MCF 10A (cell line): ENCODE measurements at regions of chr11 and their contacts with region 1.

Region 1: DNA sequence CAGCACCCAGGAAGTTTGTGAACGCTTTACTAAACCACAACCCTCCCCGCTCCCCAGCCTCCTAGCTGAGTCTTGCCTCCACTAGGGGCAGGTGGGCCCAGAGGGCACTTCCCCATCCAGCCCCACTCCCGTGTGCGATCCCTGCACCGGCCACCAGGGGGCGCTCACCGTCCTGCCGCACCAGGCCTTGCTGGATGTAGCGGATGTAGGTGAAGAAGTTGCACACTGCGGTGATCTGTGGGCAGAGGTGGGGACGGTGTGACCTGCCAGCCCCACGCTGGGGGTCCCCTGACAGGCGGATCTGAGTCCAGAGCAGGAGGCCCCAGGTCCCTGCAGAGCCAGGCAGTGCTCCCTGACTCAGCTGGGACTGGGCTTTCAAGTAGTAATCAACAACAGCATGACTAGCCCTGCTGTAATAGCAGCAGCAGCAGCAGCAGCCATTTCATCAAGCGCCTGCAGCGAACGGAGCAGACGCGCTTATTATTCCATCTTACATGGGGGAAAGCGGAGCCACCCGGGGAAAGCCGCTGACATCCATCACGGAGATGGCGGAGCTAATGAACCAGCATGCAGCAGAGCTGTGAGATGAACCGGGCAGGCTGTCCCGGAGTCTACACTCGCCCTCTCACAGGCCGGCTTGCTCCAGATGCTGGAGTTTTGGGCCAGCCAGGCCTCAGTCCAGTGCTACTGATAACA is 7.9 kb upstream of the FADS3 start:
- DNase-seq: peak; percentile 76
- H3K4me3 Mint-ChIP-seq: no peak overlapping the region
- H3K27ac Mint-ChIP-seq: no peak overlapping the region
- H3K4me1 Mint-ChIP-seq: peaks cover 1% of the 10 kb centered on the region
- H3K27me3 Mint-ChIP-seq: no peaks in the 10 kb centered on the region
- CTCF ChIP-seq: peak; percentile 100

Region 2: DNA sequence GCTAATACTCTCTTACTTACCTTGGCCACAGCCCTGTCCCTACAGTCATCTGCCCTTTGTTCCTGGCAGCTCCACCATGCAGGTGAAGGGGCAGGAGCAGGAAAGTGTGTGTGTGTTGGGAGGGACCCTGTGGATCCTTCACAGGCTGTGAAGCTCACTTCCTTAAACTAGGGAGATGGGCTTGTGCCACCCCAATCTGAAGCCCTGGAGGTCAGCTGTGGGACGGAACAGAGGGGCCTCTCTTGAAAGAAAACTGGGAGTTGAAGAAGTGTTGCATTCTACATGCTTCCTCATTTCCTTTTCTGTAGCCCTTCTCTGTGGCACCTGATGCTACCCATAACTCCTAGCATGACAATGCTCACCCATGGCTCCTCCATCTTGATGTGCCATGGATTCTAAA is 94.1 kb before region 1 on chr11:
- CTCF ChIA-PET with region 1: interaction called, 14 read pairs
- POLR2A ChIA-PET with region 1: interaction called, 3 read pairs
- intact Hi-C with region 1: no loop called
- DNase-seq: no peak
- H3K4me3 Mint-ChIP-seq: no peak overlapping the region
- H3K27ac Mint-ChIP-seq: no peak overlapping the region
- H3K4me1 Mint-ChIP-seq: no peaks in the 10 kb centered on the region
- H3K27me3 Mint-ChIP-seq: no peaks in the 10 kb centered on the region
- CTCF ChIP-seq: no peak

Region 3: GRCh38 chr11:61923166-61924063 is 24.1 kb after region 1 on chr11:
- CTCF ChIA-PET with region 1: interaction called, 24 read pairs
- POLR2A ChIA-PET with region 1: no interaction called
- intact Hi-C with region 1: no loop called
- DNase-seq: no peak
- H3K4me3 Mint-ChIP-seq: no peak overlapping the region
- H3K27ac Mint-ChIP-seq: no peak overlapping the region
- H3K4me1 Mint-ChIP-seq: no peaks in the 10 kb centered on the region
- H3K27me3 Mint-ChIP-seq: peaks cover 28% of the 10 kb centered on the region
- CTCF ChIP-seq: no peak

Region 4: GRCh38 chr11:61961570-61962212 is 62.4 kb after region 1 on chr11:
- CTCF ChIA-PET with region 1: interaction called, 26 read pairs
- POLR2A ChIA-PET with region 1: interaction called, 3 read pairs
- intact Hi-C with region 1: loop called (anchors 5 kb)
- DNase-seq: peak; percentile 57
- H3K4me3 Mint-ChIP-seq: no peak overlapping the region
- H3K27ac Mint-ChIP-seq: peak overlapping the region; percentile 70
- H3K4me1 Mint-ChIP-seq: peaks cover 45% of the 10 kb centered on the region
- H3K27me3 Mint-ChIP-seq: no peaks in the 10 kb centered on the region
- CTCF ChIP-seq: no peak

Region 5: DNA sequence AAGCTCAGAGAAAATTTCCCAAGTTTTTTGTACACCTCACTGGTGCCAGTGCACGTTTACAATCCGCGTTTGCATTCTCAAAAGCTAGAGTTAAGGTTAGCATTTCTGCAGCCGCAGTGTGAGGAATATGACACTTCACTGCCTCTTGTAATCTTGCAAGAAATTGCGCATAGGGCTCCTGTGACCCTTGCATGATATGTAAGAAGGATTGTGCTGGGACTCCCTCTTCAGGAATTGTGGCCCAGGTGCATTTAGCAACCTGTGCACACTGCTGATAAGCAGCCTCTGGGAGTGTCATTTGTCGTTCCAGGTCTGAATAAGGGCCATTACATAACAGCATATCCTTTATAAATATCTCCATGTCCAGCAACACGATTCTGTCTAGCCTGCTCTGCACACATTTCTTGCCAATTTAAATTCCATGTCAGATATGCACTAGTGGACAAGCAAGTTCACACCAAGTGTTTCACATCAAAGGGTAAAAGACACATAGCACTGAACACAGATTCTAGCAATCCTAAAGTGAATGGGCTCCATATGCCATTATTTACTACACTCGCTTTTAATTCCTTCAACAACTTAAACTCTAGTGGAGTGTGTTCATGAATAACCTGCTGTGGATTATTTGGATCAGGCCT is 155.3 kb after region 1 on chr11:
- CTCF ChIA-PET with region 1: interaction called, 149 read pairs
- POLR2A ChIA-PET with region 1: interaction called, 4 read pairs
- intact Hi-C with region 1: loop called (anchors 1 kb)
- DNase-seq: peak; percentile 93
- H3K4me3 Mint-ChIP-seq: peak overlapping the region; percentile 26
- H3K27ac Mint-ChIP-seq: peak overlapping the region; percentile 75
- H3K4me1 Mint-ChIP-seq: peaks cover 18% of the 10 kb centered on the region
- H3K27me3 Mint-ChIP-seq: no peaks in the 10 kb centered on the region
- CTCF ChIP-seq: peak; percentile 81

Region 6: DNA sequence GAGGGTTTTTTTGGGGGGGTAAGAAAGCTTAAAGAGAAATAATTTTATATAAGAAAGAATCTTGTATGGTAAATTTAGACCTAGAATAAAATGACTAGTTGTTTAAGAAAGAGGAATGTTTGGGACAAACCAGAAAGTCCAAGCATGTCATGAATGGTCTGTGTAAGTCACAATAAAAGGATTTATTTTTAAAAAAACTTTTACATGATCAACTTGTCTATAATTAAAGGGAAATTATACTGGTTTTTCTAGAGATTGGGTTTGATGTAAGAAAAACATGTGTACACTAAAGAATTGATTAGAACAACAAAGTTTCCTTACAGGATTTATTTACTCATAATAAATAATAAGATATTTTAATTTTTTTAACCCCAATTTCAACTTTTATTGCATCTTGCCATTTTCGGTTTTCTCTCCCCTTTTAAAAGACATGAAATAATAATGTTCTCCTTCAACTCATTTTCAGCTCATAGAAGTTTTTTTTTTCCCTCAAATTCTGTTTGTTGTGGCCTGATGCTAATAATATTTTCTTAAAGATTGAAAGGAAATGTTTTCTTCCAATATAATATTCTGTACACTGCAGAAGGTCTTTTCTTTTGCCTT is 189.1 kb after region 1 on chr11:
- CTCF ChIA-PET with region 1: interaction called, 161 read pairs
- POLR2A ChIA-PET with region 1: no interaction called
- intact Hi-C with region 1: no loop called
- DNase-seq: peak; percentile 27
- H3K4me3 Mint-ChIP-seq: no peak overlapping the region
- H3K27ac Mint-ChIP-seq: no peak overlapping the region
- H3K4me1 Mint-ChIP-seq: no peaks in the 10 kb centered on the region
- H3K27me3 Mint-ChIP-seq: no peaks in the 10 kb centered on the region
- CTCF ChIP-seq: no peak

Region 7: GRCh38 chr11:62193952-62194351 is 294.7 kb after region 1 on chr11:
- CTCF ChIA-PET with region 1: no interaction called
- POLR2A ChIA-PET with region 1: no interaction called
- intact Hi-C with region 1: no loop called
- DNase-seq: peak; percentile 17
- H3K4me3 Mint-ChIP-seq: no peak overlapping the region
- H3K27ac Mint-ChIP-seq: no peak overlapping the region
- H3K4me1 Mint-ChIP-seq: no peaks in the 10 kb centered on the region
- H3K27me3 Mint-ChIP-seq: peaks cover 71% of the 10 kb centered on the region
- CTCF ChIP-seq: no peak